Colonic mucosa (tissue), 4 donors: ENCODE measurements at regions of chr2 and their contacts with region 1.

Region 1: DNA sequence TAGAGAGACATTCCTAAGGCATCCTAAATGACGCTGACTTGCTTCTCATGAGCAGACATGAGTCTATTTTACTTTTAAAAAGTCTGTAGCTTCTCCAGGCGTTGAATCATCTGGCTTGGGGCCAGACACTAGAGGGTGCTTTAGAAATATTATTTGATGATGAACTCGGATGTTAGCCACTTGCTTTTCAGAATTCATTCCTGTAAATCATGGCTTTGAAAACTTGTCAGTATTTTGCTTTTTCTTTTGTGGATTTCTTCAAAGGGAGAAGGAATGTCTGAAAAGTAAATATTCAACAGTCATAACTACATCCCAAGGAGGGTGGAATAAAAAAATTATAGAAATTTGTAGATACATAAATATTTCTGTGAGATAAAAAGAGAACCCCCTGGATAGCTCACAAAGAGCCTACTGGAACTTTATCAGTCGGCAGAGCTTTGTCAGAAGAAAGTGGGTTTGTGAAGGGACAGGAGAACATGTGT is 370.8 kb downstream of the OSR1 start:
- DNase-seq: peak; percentile 69
- H3K4me3 ChIP-seq: no peak overlapping the region
- H3K27ac ChIP-seq: no peak overlapping the region
- H3K4me1 ChIP-seq: no peaks in the 10 kb centered on the region
- H3K27me3 ChIP-seq: no peaks in the 10 kb centered on the region
- CTCF ChIP-seq: no peak

Region 2: GRCh38 chr2:19349911-19350677 is 362.5 kb after region 1 on chr2:
- intact Hi-C with region 1: loop called (anchors 10 kb)
- DNase-seq: peak; percentile 68
- H3K4me3 ChIP-seq: peak overlapping the region; percentile 12
- H3K27ac ChIP-seq: no peak overlapping the region
- H3K4me1 ChIP-seq: peaks cover 6% of the 10 kb centered on the region
- H3K27me3 ChIP-seq: peaks cover 17% of the 10 kb centered on the region
- CTCF ChIP-seq: peak; percentile 76